Heart left ventricle (tissue), 16 donors: ENCODE measurements at regions of chr19 and their contacts with region 1.

Region 1: GRCh38 chr19:17703824-17704463 is 15.3 kb upstream of the MAP1S start:
- DNase-seq: peak in 2 of 5 donors; percentile 52 to 56
- ATAC-seq: peak in 3 of 4 donors; percentile 75 to 82 (median 76)
- H3K4me3 ChIP-seq: no peak overlapping the region
- H3K27ac ChIP-seq: no peak overlapping the region
- H3K4me1 ChIP-seq: peaks cover 0 to 6% (median 0%) of the 10 kb centered on the region in 12 donors
- H3K27me3 ChIP-seq: peaks cover 0 to 25% (median 5%) of the 10 kb centered on the region in 9 donors
- CTCF ChIP-seq: peak; percentile 68 to 93 (median 80)
- POLR2A ChIP-seq: no peak

Region 2: DNA sequence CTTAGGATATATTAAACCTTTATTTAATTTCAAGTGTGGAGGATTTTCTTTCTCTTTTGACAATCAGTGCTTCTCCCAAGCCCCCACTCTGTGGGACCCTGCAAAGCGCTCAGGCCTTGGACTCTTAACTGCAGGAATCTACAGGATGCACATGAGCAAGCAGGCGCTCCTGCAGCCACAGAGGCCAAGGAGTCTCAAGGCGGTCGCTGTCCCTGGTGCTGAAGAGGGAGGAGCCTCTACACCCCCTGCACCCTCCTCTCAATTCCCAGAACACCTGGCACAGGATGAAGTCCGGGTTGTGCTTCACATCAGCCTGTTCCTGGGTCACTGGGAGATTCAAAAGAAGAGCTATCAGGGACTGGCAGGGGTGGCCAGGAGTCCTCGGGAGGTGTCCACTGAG is 1741.6 kb before region 1 on chr19:
- intact Hi-C with region 1: no loop called
- DNase-seq: no peak
- ATAC-seq: no peak
- H3K4me3 ChIP-seq: no peak overlapping the region
- H3K27ac ChIP-seq: no peak overlapping the region
- H3K4me1 ChIP-seq: no peaks in the 10 kb centered on the region
- H3K27me3 ChIP-seq: peaks cover 0 to 19% (median 0%) of the 10 kb centered on the region in 9 donors
- CTCF ChIP-seq: no peak
- POLR2A ChIP-seq: no peak

Region 3: DNA sequence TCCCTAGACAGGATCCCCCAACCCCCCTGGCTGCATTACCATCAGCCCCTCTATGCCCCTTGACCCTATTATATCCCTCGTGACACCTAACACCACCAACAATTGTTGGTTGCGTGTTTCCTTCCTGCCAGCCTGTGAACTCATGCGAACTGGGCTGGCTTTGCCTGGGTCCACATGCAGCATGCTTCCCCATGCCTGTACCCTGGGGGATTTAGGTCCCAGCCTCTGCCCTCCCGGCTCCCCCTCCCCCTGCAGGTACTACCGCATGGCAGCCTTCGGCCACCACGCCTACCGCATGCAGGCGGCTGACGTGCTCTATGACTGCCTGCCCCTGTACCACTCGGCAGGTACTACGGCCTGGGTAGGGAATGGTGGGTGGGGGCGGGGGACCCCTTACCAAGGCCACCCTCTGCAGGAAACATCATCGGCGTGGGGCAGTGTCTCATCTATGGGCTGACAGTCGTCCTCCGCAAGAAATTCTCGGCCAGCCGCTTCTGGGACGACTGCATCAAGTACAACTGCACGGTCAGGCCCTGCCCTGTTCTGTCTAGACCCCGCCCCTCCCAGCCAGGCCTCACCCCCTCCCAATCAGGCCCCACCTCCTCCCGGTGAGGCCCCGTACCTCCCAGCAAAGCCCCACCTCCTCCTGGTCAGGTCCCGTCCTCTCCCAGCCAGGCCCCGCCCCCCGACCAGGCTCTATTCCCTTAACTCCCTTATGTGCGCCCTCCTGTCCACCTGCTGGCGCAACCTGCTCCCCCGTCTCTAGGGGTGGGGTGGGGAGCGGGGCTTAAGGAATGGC is 215.2 kb before region 1 on chr19:
- intact Hi-C with region 1: no loop called
- DNase-seq: peak in 4 of 5 donors; percentile 67 to 81 (median 70)
- ATAC-seq: peak; percentile 72 to 87 (median 80)
- H3K4me3 ChIP-seq: peak overlapping the region in 6 of 12 donors; percentile 8 to 41 (median 30)
- H3K27ac ChIP-seq: peak overlapping the region in 8 of 12 donors; percentile 19 to 67 (median 42)
- H3K4me1 ChIP-seq: peaks cover 0 to 32% (median 13%) of the 10 kb centered on the region in 12 donors
- H3K27me3 ChIP-seq: no peaks in the 10 kb centered on the region
- CTCF ChIP-seq: peak in 2 of 12 donors; percentile 22 to 38
- POLR2A ChIP-seq: no peak

Region 4: DNA sequence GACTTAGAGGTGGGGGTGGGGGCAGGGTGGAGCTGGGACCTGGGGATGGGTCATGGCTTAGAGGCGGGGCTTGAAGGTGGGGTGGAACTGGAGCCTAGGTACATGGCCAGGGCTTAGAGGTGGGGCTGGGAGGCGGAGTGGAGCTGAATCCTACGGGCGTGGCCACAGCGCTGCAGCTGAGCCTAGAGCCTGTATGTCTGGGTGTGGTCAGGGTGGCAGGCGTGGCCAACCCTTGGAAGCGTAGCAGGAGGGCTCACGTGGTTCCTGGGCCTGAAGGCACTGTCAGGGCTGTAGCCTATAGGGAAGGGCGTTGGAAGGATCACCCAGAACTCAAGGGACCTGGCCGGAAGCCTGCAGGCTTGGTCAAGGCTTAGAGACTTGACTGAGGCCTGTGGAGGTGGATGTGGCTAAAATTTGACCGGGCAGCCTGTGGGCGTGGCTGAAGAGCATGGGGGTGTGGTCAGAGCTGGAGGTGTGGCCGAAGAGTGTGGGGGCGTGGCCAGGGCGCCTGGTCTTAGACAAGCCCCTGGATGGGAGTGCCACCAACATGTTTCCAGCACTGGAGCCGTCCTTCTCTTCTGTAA is 124.2 kb before region 1 on chr19:
- intact Hi-C with region 1: no loop called
- DNase-seq: peak in 4 of 5 donors; percentile 40 to 63 (median 46)
- ATAC-seq: peak; percentile 62 to 80 (median 76)
- H3K4me3 ChIP-seq: no peak overlapping the region
- H3K27ac ChIP-seq: no peak overlapping the region
- H3K4me1 ChIP-seq: no peaks in the 10 kb centered on the region
- H3K27me3 ChIP-seq: no peaks in the 10 kb centered on the region
- CTCF ChIP-seq: no peak
- POLR2A ChIP-seq: peak in 1 of 2 donors; percentile 16

Region 5: DNA sequence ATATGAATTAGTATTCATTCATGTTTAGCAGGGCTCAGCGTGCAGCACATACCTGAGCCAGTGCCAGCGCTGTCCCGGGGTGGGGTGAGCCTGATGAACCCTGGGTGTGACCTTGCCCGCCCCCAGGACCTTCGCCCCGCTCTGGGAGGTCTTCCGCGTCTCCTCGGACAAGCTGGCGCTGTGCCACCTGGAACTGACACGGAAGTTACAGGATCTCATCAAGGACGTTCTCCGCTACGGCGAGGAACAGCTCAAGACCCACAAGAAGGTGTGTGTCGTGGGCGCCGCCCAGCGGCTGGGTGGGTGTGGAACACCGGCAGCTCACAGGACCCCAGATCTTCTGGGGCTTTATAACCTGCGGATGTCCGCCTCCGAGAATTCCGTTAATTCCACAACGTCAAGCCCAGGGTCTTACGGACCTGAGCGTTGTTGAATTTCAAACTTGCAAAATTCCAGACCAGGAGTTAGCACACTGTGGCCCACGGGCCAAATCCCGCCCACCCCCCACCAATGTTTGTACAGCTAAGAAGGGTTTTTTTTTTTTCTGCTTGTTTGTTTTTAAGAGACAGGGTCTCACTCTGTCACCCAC is 62.7 kb after region 1 on chr19:
- intact Hi-C with region 1: loop called (anchors 1 to 10 kb)
- DNase-seq: peak; percentile 71 to 91 (median 80)
- ATAC-seq: peak; percentile 32 to 92 (median 85)
- H3K4me3 ChIP-seq: peak overlapping the region in 5 of 12 donors; percentile 7 to 30 (median 25)
- H3K27ac ChIP-seq: no peak overlapping the region
- H3K4me1 ChIP-seq: peaks cover 0 to 13% (median 6%) of the 10 kb centered on the region in 12 donors
- H3K27me3 ChIP-seq: no peaks in the 10 kb centered on the region
- CTCF ChIP-seq: peak; percentile 77 to 90 (median 79)
- POLR2A ChIP-seq: no peak

Region 6: DNA sequence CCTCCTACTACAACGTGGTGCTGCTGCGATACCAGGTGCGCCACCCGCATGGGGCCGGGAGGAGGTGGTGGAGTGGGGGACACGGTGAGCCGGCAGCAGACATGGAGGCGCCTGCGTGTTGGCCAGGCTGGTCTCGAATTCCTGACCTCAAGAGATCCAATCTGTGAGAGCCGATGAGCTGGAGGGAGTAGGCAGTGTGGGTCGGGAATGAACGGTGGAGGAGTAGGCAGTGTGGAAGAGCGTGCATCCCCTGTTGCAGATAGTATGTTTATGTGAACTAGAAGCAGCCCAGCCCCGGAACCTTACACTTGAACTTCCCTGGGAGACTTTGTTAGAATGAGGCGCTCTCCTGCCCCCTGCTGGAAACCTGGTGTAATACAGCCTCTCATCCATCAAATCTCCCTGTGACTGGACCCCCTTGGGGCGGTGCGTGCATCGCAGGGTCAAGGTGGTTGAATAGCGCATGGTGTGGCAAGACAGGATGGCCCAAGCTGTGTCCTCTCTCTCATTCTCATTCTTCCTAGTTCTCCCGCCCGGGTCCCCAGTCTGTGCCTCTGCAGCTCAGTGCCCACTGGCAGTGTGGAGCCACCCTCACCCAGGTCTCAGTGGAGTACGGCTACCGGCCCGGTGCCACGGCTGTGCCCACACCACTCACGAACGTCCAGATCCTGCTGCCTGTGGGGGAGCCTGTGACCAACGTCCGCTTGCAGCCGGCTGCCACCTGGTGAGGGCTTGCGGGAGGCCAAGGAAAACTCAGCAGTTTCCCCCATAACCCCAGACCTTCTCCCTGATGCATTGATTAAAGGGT is 80.5 kb after region 1 on chr19:
- intact Hi-C with region 1: loop called in 2 of 10 experiments (anchors 5 kb)
- DNase-seq: peak; percentile 39 to 73 (median 58)
- ATAC-seq: peak in 3 of 4 donors; percentile 34 to 70 (median 67)
- H3K4me3 ChIP-seq: no peak overlapping the region
- H3K27ac ChIP-seq: no peak overlapping the region
- H3K4me1 ChIP-seq: peaks cover 0 to 5% (median 0%) of the 10 kb centered on the region in 12 donors
- H3K27me3 ChIP-seq: peaks cover 0 to 32% (median 13%) of the 10 kb centered on the region in 9 donors
- CTCF ChIP-seq: peak; percentile 65 to 82 (median 76)
- POLR2A ChIP-seq: no peak